MCF 10A (cell line): ENCODE measurements at regions of chr3 and their contacts with region 1.

Region 1: DNA sequence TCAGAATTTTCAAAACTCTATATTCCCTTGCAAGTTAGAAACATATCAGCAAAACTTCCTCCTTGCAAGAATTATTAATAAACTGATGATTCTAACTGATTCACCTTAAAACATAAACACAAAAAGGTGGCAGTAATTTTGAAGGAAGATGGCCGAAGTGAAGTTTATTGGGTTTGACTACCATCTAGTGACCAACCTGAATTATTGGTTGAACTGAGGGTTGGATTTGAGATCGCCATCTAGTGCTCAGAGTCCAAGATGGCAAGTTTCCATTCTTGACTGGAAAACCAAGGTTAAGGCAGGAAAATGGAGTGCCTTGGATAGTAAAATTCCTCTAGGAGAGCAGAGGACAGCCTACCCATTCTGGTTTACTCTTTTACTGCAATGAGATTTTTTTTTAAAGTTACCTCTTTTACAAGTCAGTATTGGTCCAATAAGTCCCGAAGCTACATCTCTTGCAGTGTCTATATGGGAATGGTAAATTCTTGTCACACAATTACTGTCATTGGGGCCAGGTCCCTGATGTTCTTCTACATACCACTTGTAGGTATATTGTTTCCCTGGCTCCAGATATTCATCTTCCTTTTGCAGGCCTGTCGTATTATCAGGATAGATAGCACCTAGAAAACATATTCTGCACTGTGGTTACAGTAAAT is 51.6 kb upstream of the CP start:
- DNase-seq: peak; percentile 88
- H3K4me3 Mint-ChIP-seq: no peak overlapping the region
- H3K27ac Mint-ChIP-seq: no peak overlapping the region
- H3K4me1 Mint-ChIP-seq: peaks cover 15% of the 10 kb centered on the region
- H3K27me3 Mint-ChIP-seq: no peaks in the 10 kb centered on the region
- CTCF ChIP-seq: peak; percentile 94

Region 2: GRCh38 chr3:148955544-148956346 is 317.5 kb before region 1 on chr3:
- CTCF ChIA-PET with region 1: interaction called, 51 read pairs
- POLR2A ChIA-PET with region 1: interaction called, 3 read pairs
- intact Hi-C with region 1: loop called (anchors 1 kb)
- DNase-seq: peak; percentile 66
- H3K4me3 Mint-ChIP-seq: no peak overlapping the region
- H3K27ac Mint-ChIP-seq: no peak overlapping the region
- H3K4me1 Mint-ChIP-seq: no peaks in the 10 kb centered on the region
- H3K27me3 Mint-ChIP-seq: peaks cover 13% of the 10 kb centered on the region
- CTCF ChIP-seq: peak; percentile 54

Region 3: GRCh38 chr3:149114458-149114857 is 158.8 kb before region 1 on chr3:
- CTCF ChIA-PET with region 1: interaction called, 181 read pairs
- POLR2A ChIA-PET with region 1: no interaction called
- intact Hi-C with region 1: no loop called
- DNase-seq: no peak
- H3K4me3 Mint-ChIP-seq: no peak overlapping the region
- H3K27ac Mint-ChIP-seq: no peak overlapping the region
- H3K4me1 Mint-ChIP-seq: no peaks in the 10 kb centered on the region
- H3K27me3 Mint-ChIP-seq: no peaks in the 10 kb centered on the region
- CTCF ChIP-seq: no peak

Region 4: GRCh38 chr3:149129326-149130205 is 143.7 kb before region 1 on chr3 and contains the start of gene HPS3:
- CTCF ChIA-PET with region 1: interaction called, 12 read pairs
- POLR2A ChIA-PET with region 1: interaction called, 9 read pairs
- intact Hi-C with region 1: loop called (anchors 2 kb)
- DNase-seq: peak; percentile 88
- H3K4me3 Mint-ChIP-seq: peak within 1 kb of the TSS; percentile 93
- H3K27ac Mint-ChIP-seq: peak within 1 kb of the TSS; percentile 75
- H3K4me1 Mint-ChIP-seq: peaks cover 28% of the 10 kb centered on the region
- H3K27me3 Mint-ChIP-seq: no peaks in the 10 kb centered on the region
- CTCF ChIP-seq: no peak
- total RNA-seq, gene HPS3: 7.7 and 11.1 TPM in 2 replicates

Region 5: DNA sequence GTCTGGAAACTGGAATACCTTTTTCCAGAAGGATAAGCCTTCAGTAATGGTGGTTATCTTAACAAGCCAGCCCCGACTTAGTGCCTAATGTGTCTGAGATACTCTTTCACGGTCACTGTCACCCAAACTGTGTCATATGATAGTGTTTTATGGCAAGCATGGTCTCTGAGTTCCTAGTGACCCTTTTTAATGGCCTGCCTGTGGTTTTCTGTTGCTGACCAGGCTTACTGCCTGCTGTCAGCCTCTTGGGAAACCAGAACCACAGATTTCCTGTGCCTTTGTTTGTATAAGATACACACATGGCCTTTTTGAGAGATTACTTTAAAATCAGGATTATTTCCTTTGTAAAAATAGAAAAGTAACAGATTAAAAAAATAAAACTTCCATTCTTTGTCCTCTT is 121.4 kb before region 1 on chr3:
- CTCF ChIA-PET with region 1: no interaction called
- POLR2A ChIA-PET with region 1: no interaction called
- intact Hi-C with region 1: no loop called
- DNase-seq: no peak
- H3K4me3 Mint-ChIP-seq: no peak overlapping the region
- H3K27ac Mint-ChIP-seq: no peak overlapping the region
- H3K4me1 Mint-ChIP-seq: no peaks in the 10 kb centered on the region
- H3K27me3 Mint-ChIP-seq: no peaks in the 10 kb centered on the region
- CTCF ChIP-seq: no peak

Region 6: GRCh38 chr3:149180057-149180573 is 93.1 kb before region 1 on chr3:
- CTCF ChIA-PET with region 1: interaction called, 5 read pairs
- POLR2A ChIA-PET with region 1: interaction called, 3 read pairs
- intact Hi-C with region 1: loop called (anchors 2 kb)
- DNase-seq: peak; percentile 100
- H3K4me3 Mint-ChIP-seq: no peak overlapping the region
- H3K27ac Mint-ChIP-seq: no peak overlapping the region
- H3K4me1 Mint-ChIP-seq: peaks cover 6% of the 10 kb centered on the region
- H3K27me3 Mint-ChIP-seq: no peaks in the 10 kb centered on the region
- CTCF ChIP-seq: no peak

Region 7: DNA sequence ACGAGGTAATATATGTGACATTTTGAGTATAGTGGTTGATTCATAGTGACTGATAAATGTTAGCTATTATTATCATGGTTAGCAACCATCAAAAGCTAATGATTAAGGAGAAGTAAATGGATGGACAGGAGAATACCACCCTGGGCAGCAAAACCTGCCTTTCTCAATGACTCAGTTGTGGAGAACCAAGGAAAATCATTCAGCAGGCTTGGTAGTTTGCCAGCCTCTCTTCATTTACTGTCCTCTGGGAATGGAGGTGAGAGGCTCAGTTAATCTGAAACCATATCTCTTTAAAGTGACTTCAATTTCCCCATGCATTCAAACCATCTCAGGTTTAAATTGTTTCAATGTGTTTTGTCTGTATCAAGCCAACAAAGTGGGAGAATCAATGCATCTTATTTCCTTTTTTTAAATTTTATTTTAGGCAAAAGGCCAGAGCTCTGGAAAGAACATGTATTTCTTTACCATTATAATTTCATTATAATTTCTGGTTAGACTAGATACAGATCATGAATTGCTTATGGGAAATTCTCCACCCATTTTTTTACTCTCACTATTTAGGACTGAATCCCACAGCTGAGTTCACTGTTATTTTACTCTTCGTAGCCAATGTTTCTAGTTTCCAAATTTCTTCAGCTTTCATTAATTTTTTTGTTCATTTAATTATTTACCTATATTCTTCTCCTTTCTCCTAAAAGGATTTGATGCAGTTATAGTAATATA is 57.5 kb after region 1 on chr3:
- CTCF ChIA-PET with region 1: interaction called, 7 read pairs
- POLR2A ChIA-PET with region 1: no interaction called
- intact Hi-C with region 1: loop called (anchors 1 kb)
- DNase-seq: peak; percentile 29
- H3K4me3 Mint-ChIP-seq: no peak overlapping the region
- H3K27ac Mint-ChIP-seq: no peak overlapping the region
- H3K4me1 Mint-ChIP-seq: no peaks in the 10 kb centered on the region
- H3K27me3 Mint-ChIP-seq: no peaks in the 10 kb centered on the region
- CTCF ChIP-seq: no peak

Region 8: DNA sequence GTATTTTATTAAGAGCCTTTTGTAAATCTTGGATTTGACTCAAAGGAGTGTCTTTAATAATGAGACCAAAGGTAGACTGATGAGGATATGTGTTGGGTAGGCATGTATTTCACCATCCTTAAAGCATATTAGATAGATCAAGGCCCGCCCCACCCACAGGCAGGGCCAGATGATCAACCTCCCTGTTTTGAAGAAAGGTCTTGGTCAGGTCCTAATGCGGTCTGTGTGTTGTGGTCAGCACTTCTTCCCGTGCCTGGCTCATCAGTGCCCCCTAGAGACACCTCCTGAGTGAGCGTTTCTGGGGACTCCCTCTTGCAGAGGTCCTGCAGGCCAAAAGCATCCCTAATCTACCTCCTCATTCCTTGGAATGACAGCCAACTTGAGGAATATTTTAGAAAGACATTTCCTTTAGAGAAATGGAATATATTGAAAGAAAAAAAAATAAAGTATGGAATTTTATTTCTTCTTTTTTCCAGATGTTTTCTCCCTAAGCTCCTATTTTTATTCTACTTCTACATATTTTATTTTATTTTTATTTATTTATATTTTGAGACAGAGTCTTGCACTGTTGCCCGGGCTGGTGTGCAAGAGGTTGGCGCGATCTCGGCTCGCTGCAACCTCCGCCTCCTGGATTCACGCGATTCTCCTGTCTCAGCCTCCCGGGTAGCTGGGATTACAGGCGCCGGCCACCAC is 207.2 kb after region 1 on chr3:
- CTCF ChIA-PET with region 1: interaction called, 3 read pairs
- POLR2A ChIA-PET with region 1: no interaction called
- intact Hi-C with region 1: loop called (anchors 1 kb)
- DNase-seq: peak; percentile 88
- H3K4me3 Mint-ChIP-seq: no peak overlapping the region
- H3K27ac Mint-ChIP-seq: no peak overlapping the region
- H3K4me1 Mint-ChIP-seq: no peaks in the 10 kb centered on the region
- H3K27me3 Mint-ChIP-seq: no peaks in the 10 kb centered on the region
- CTCF ChIP-seq: peak; percentile 88

Region 9: DNA sequence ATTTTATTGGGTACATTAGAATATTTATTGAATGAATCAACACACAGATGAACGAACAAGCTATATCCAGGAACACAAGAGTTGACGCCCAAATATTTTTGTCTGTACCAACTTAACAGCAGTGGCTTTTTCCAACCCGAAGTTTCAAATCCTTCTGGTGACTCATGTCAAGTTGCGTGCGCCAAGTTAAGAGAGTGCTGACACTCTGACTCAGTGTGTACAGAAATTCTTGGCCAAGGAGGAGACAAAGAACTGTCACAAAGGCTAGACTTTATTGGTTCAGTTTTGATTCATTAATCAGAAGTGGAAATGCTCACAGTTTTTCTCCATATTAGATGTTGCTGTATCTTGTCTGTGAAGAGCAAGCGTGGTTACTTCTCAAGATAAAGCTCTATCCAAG is 1075.3 kb after region 1 on chr3:
- CTCF ChIA-PET with region 1: no interaction called
- POLR2A ChIA-PET with region 1: no interaction called
- intact Hi-C with region 1: no loop called
- DNase-seq: peak; percentile 93
- H3K4me3 Mint-ChIP-seq: peak overlapping the region; percentile 8
- H3K27ac Mint-ChIP-seq: peak overlapping the region; percentile 91
- H3K4me1 Mint-ChIP-seq: peaks cover 50% of the 10 kb centered on the region
- H3K27me3 Mint-ChIP-seq: no peaks in the 10 kb centered on the region
- CTCF ChIP-seq: no peak